Heart right ventricle (tissue), 16 donors: ENCODE measurements at regions of chr12 and their contacts with region 1.

Region 1: GRCh38 chr12:7108796-7109571 is at the start of gene C1RL:
- DNase-seq: peak; percentile 90
- ATAC-seq: peak; percentile 75 to 91 (median 88)
- H3K4me3 ChIP-seq: peak within 1 kb of the TSS in 9 of 10 donors; percentile 41 to 70 (median 63)
- H3K27ac ChIP-seq: peak within 1 kb of the TSS; percentile 70 to 98 (median 89)
- H3K4me1 ChIP-seq: peaks cover 0 to 44% (median 14%) of the 10 kb centered on the region in 9 donors
- H3K27me3 ChIP-seq: no peaks in the 10 kb centered on the region
- CTCF ChIP-seq: peak; percentile 94 to 99 (median 97)
- total RNA-seq, gene C1RL: 4.5 to 24.9 (median 7.5) TPM

Region 2: DNA sequence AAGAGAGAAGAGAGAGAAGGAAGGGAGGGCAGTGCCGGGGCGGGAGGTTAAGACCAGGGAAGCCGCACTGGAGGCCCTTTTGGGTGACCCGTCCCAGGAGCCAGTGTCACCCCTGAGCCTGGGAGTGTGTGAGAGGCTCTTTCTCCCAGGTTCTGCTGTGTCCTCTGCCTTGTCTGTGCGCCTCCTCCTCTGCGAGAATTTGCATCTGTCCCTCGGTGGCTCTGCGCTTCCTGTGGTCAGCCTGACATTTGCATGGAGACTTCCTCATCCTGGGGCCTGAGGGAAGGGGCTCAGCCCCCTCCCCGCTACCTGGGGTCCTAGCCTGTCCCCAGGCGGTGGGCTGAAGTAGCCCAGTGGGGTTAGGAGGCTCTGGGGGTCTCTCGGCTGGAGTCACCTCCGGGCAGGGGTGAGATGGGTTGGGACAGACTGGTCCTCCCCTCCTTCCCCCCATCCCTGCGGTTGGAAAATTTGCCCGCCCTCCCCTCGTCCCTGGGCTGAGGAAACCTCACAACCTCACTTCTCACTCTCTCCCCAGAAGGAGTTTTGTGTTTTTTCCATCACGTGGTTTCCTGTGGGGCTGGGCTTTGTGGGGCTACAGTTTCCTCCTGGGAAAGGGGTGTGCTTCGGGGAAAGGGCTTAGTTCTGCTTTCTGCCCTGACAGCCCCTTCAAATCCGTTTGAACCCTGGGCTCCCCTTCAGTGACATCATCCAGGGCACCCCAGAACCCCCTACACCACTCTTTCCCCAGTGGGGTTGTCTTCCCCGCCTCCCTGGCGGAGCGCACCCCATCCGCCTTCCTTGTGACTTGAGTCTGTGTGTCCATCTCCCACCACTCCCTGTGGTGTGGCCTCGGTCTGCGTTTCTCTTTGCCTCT is 155.3 kb before region 1 on chr12:
- intact Hi-C with region 1: loop called in 5 of 10 experiments (anchors 5 to 10 kb)
- DNase-seq: peak in 1 of 2 donors; percentile 79
- ATAC-seq: peak; percentile 22 to 78 (median 72)
- H3K4me3 ChIP-seq: peak overlapping the region in 6 of 10 donors; percentile 37 to 80 (median 42)
- H3K27ac ChIP-seq: peak overlapping the region in 9 of 10 donors; percentile 1 to 98 (median 75)
- H3K4me1 ChIP-seq: peaks cover 0 to 86% (median 23%) of the 10 kb centered on the region in 9 donors
- H3K27me3 ChIP-seq: no peaks in the 10 kb centered on the region
- CTCF ChIP-seq: no peak

Region 3: GRCh38 chr12:7197841-7198240 is 88.9 kb after region 1 on chr12:
- intact Hi-C with region 1: no loop called
- DNase-seq: no peak
- ATAC-seq: no peak
- H3K4me3 ChIP-seq: no peak overlapping the region
- H3K27ac ChIP-seq: no peak overlapping the region
- H3K4me1 ChIP-seq: no peaks in the 10 kb centered on the region
- H3K27me3 ChIP-seq: no peaks in the 10 kb centered on the region
- CTCF ChIP-seq: no peak

Region 4: DNA sequence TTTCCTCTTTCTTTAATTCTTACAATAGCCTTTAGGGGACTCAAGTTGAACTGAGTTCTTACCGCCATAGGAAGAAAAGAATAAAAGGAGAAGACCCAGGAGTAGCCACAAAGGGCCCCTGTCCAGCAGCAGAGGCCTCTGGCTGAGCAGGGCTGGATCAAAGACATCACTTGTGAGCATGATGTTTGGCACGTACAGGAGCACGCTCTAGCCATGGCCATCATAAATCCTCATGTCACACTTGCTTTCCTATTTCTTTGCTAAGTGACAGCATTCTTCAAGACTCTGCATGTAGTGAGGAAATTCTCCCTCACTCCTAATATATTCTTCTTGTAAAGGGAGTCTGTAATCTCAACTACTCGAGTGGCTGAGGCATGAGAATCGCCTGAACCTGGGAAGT is 622.5 kb after region 1 on chr12:
- intact Hi-C with region 1: no loop called
- DNase-seq: no peak
- ATAC-seq: no peak
- H3K4me3 ChIP-seq: no peak overlapping the region
- H3K27ac ChIP-seq: no peak overlapping the region
- H3K4me1 ChIP-seq: no peaks in the 10 kb centered on the region
- H3K27me3 ChIP-seq: peaks cover 0 to 12% (median 0%) of the 10 kb centered on the region in 7 donors
- CTCF ChIP-seq: no peak